WTC11 (cell line): ENCODE measurements at regions of chr1 and their contacts with region 1.

Region 1: DNA sequence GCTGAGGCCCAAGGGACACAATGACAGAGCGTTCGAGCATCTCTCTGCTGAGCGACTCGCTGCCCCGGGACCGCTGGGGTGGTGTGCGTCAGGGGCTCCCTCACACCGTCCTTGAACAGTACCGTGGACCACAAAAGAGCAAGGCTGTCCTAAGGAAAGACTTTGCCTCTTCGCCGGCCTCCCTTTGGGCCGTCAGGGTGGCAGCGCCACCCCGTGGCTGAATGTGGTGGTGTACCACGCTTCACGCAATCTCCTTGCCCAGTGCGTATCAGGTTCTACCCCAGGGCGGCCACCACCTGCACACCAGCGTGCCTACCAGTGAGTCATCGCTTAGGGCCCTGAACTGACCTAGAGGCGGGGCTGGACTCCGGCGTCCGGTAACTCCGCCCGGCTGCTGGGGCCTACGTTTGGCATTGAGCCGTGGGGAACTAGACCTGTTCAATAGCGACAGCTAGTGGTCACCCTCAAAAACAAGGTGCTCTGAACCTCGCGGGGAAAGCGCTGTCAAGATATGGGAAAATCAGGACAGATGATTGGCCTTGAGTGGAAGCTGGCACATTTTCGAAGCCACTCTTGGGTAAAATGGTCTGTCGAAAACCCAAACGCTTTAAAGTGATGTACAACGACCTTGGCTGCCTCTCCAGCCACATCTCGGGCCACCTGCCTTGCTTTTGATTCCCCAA is 8.1 kb upstream of the TRAF3IP3 start:
- DNase-seq: peak; percentile 99
- ATAC-seq: peak; percentile 99
- H3K4me3 Mint-ChIP-seq: peak overlapping the region; percentile 51
- H3K27ac Mint-ChIP-seq: no peak overlapping the region
- H3K4me1 Mint-ChIP-seq: peaks cover 10% of the 10 kb centered on the region
- H3K27me3 Mint-ChIP-seq: peaks cover 23% of the 10 kb centered on the region
- CTCF ChIP-seq: peak; percentile 96

Region 2: GRCh38 chr1:209736490-209737117 is 11.1 kb before region 1 on chr1:
- CTCF ChIA-PET with region 1: interaction called, 13 read pairs
- POLR2A ChIA-PET with region 1: no interaction called
- DNase-seq: no peak
- ATAC-seq: no peak
- H3K4me3 Mint-ChIP-seq: no peak overlapping the region
- H3K27ac Mint-ChIP-seq: no peak overlapping the region
- H3K4me1 Mint-ChIP-seq: no peaks in the 10 kb centered on the region
- H3K27me3 Mint-ChIP-seq: peaks cover 16% of the 10 kb centered on the region
- CTCF ChIP-seq: no peak

Region 3: GRCh38 chr1:209761011-209761635 is 13.4 kb after region 1 on chr1:
- CTCF ChIA-PET with region 1: interaction called, 15 read pairs
- POLR2A ChIA-PET with region 1: no interaction called
- DNase-seq: no peak
- ATAC-seq: no peak
- H3K4me3 Mint-ChIP-seq: no peak overlapping the region
- H3K27ac Mint-ChIP-seq: no peak overlapping the region
- H3K4me1 Mint-ChIP-seq: no peaks in the 10 kb centered on the region
- H3K27me3 Mint-ChIP-seq: peaks cover 12% of the 10 kb centered on the region; the same call in 1 of the 2 replicates
- CTCF ChIP-seq: no peak

Region 4: DNA sequence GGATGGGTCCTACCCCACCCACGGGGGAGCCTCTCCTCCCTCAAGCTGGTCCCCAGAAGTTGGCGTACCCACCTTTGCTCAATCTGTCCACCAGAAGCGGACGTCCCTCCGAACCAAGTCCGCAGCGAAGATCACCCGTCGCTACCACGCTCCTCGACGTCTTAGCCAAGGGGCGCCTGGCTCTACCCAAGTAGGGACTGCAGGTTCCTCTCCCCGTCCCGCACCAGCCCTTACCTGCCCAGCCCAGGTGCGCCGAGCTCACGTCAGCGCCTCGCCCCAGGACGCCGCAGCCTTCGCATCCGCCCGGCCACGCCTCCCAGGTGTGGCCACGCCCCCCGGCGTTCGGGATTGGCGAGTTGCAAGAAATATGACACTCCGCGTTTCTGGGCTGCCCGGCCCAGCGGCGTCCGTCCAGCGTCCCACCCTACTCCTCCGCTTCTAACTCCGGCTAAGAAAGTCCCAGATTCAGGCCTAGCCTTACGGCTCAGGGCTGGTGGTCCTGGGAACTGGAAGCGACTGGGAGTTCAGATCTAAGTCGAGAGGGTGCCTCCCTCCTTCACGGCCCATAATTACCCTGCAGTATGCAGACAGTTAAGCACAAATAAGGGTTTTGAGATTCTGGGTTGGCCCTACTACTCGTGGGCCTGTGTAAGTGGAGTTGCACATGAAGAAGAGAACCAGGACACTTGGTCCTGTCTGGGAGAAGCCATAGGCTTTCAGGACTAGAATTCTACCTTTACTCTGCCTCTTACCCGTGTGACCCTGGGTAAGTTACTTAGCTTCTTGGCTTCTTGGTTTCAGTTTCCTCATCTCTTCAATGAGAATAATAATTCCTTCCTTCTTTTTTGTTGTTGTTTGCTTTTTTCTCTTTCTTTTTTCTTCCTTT is 58.4 kb after region 1 on chr1 and contains the start of gene IRF6:
- CTCF ChIA-PET with region 1: interaction called, 15 read pairs
- POLR2A ChIA-PET with region 1: no interaction called
- DNase-seq: peak; percentile 98
- ATAC-seq: peak; percentile 93
- H3K4me3 Mint-ChIP-seq: peak within 1 kb of the TSS; percentile 98
- H3K27ac Mint-ChIP-seq: peak within 1 kb of the TSS; percentile 99
- H3K4me1 Mint-ChIP-seq: peaks cover 17% of the 10 kb centered on the region
- H3K27me3 Mint-ChIP-seq: no peaks in the 10 kb centered on the region; the same call in none of the 2 replicates
- CTCF ChIP-seq: no peak
- total RNA-seq, gene IRF6: 16.6 to 17.9 TPM (median 17.2 TPM) in 3 replicates